ENCODE measurements at regions of chr2 and their contacts with region 1.

Region 1: DNA sequence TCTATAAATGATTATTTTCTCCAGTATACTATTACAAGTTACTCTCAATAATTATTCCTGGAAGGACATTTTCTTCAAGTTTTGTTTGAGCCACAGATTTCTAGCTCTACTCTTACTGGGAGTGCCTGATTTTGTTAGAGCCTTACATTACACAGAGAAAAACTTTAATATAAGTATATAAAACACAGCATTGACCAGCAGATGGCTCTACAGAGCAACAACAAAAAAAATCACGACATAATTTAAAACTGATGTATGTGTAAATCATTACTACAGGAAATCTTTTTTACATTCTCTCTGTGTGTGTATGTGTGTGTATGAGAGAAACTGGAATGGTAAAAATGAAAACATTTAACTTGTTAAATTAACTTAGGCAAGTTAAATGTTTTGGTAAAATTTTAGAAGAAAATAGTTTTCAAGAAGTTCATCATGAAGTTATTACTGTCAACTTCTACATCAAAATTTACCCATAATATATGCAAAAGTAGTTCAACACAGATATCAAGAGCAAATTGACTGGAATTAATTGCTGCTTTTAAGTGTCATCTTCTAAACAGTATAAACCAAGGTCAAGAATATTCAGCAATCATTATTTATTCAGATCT is 103.3 kb downstream of the MDH1 start:
- DNase-seq: peak; percentile 20
- ATAC-seq: peak; percentile 56; the same call in 1 of the 2 replicates
- H3K4me3 ChIP-seq: no peak overlapping the region
- H3K27ac ChIP-seq: no peak overlapping the region
- H3K4me1 ChIP-seq: no peaks in the 10 kb centered on the region
- H3K27me3 ChIP-seq: no peaks in the 10 kb centered on the region; the same call in 1 of the 2 replicates
- CTCF ChIP-seq: peak; percentile 64; the same call in 1 of the 2 replicates

Region 2: DNA sequence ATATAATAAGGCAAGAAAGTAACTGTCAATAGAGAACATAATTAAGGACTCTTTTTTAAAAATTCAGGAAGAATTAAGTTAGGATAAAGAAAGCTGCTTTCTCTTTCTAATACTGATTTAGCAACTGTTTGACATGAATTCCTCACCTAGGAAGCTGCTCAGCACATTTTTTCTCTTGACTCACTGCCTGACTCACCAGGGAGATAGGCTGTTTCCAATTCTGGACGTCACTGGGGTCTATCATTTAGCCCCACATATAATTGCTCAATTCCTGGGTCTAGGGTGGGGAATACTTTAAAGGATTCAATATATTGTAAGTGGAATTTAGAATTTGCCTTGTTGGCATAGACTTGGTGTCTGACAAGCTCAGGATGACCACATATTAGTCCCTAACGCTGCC is 98.8 kb after region 1 on chr2:
- CTCF ChIA-PET with region 1: no interaction called
- POLR2A ChIA-PET with region 1: no interaction called
- in situ Hi-C with region 1: no loop called
- intact Hi-C with region 1: no loop called
- DNase-seq: no peak
- ATAC-seq: no peak
- H3K4me3 ChIP-seq: no peak overlapping the region
- H3K27ac ChIP-seq: no peak overlapping the region
- H3K4me1 ChIP-seq: no peaks in the 10 kb centered on the region
- H3K27me3 ChIP-seq: no peaks in the 10 kb centered on the region
- CTCF ChIP-seq: no peak

Region 3: GRCh38 chr2:63861220-63861822 is 169.2 kb after region 1 on chr2:
- CTCF ChIA-PET with region 1: interaction called, 3 read pairs
- POLR2A ChIA-PET with region 1: no interaction called
- in situ Hi-C with region 1: no loop called
- intact Hi-C with region 1: loop called (anchors 1 kb)
- DNase-seq: no peak
- ATAC-seq: no peak
- H3K4me3 ChIP-seq: no peak overlapping the region
- H3K27ac ChIP-seq: no peak overlapping the region
- H3K4me1 ChIP-seq: no peaks in the 10 kb centered on the region
- H3K27me3 ChIP-seq: no peaks in the 10 kb centered on the region
- CTCF ChIP-seq: peak; percentile 73

Region 4: GRCh38 chr2:63888490-63889402 is 196.6 kb after region 1 on chr2:
- CTCF ChIA-PET with region 1: no interaction called
- POLR2A ChIA-PET with region 1: no interaction called
- in situ Hi-C with region 1: no loop called
- intact Hi-C with region 1: loop called (anchors 1 kb)
- DNase-seq: peak; percentile 30
- ATAC-seq: peak; percentile 77
- H3K4me3 ChIP-seq: no peak overlapping the region
- H3K27ac ChIP-seq: no peak overlapping the region
- H3K4me1 ChIP-seq: peaks cover 7% of the 10 kb centered on the region; the same call in 1 of the 2 replicates
- H3K27me3 ChIP-seq: no peaks in the 10 kb centered on the region
- CTCF ChIP-seq: peak; percentile 86

Measured in Panc1 (cell line).